GM10248 (cell line): ENCODE measurements at regions of chr12 and their contacts with region 1.

Region 1: DNA sequence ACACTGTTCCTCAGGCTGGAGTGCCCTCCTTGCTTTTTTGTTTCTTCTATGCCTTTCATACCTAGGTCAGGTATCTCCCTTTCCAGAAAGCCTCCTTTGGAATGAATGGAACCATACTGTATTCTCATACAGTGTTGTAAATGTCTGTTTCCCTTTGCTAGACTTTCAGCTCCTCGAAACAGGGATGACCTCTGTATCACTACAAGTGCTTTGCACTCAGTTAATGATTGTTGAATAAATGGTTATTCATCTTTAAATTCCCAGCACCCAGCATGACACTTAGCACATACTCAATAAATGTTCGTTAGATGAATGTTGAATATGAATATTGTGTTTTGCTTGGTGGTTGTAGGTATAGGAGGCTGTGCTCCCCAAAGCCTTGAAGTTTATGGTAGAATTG is 5.9 kb upstream of the TULP3 start:
- DNase-seq: no peak
- CTCF ChIP-seq: no peak

Region 2: DNA sequence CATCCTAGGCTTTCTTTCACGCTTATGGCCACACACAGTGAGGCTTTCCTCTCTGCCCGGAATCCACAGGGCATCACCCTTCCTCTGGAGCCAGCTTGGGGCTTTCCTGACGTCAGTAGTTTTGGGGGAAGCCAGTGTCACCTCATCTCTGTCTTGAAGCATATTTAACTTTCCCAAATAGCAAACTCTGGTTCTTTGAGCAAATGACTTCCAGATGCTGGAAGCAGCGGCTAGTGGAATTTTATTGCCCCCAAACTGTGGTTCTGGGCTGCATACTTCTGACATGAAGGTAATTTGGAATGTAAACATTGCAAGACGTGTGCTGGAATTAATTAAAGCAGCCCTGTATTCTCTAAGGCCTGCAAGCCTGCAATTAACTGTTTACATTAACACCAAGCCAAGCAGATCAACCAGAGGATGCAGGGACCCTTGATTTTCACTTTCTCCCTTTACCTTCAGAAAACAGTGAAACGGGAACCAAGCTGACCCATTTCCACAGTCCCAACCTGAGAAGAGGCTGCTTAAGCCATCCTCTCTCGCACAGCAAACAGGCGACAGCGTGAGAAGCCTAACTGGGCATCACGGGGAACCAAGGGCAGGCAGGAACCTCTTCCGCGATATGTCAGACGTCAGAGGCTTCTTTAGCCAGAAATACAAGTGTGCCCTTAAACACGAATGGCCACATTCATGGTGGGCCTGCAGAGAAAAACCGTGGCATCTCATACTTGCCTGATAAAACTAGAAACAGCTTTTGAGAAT is 573.6 kb before region 1 on chr12:
- CTCF ChIA-PET with region 1: no interaction called
- POLR2A ChIA-PET with region 1: no interaction called
- DNase-seq: no peak
- CTCF ChIP-seq: no peak

Region 3: GRCh38 chr12:2895051-2895451 is 10.2 kb after region 1 on chr12:
- CTCF ChIA-PET with region 1: interaction called, 11 read pairs
- POLR2A ChIA-PET with region 1: no interaction called
- DNase-seq: no peak
- CTCF ChIP-seq: no peak

Region 4: DNA sequence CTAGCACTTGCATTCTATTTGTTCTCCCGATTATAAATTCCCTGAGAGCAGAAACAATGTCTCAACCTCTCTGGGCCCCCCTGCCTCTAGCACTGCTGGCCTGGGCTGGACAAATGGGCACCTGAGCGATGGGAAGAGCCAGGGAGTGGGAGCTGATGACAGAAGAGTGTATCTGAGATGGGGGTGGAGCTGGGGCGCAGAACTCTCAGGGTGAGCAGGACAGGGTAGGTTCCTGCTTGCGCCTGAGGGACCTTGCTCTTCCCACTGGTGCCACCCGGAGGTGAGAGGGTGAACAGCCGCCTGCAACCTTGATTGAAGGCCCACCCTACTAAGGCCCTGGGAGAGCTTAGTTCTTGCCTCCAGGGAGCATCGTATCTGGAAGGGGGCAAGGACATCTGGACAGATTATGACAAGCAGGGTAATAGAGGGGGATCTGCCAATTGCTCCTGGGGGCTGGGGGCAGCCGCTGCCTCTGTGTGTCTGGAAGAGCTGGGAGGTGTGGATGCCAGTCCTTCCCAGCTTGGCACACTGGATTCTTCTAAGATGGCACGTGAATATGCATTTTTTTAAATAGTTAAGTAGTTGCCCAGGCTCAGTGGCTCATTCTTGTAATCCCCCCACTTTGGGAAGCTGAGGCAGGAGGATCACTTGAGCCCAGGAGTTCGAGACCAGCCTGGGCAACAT is 149.4 kb after region 1 on chr12:
- CTCF ChIA-PET with region 1: interaction called, 14 read pairs
- POLR2A ChIA-PET with region 1: no interaction called
- DNase-seq: peak; percentile 82
- CTCF ChIP-seq: peak; percentile 69